BJ (cell line): ENCODE measurements at regions of chr12 and their contacts with region 1.

Region 1: DNA sequence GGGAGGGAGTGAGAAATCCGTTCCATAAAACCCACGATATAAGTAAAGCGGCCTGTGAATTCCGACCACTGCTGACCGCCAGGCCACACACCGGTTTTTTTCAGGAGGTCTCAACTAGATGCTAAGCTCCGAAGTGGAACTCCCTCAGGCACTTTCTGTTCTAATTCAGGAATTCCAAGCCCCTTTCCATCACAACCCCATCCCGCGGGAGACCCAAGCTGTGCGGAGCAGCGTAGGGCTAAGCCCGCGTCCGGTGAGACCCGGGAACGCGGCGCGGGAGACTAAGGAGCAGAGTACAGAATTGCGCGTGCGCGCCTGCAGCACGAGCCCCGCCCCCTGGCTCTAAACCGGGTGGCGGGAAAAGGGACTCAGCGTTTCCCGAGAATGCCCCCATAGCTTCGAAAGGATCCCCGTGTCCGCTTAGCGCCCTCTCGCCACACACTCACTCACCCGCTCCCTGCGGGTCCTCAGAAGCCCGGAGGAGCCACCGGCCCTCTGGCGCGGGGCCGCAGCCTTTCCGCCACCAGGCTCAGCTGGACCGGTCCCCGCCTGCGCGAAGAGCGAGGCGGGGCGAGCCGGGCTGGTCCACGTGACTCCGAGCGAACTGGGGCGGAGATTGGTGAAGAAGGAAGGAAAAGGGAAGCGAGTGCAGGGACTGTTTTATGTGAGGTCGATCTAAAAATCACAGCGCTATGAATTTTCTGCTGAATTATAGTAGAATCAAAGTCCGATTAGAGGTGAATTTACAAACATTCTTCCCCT is at the start of gene TIMELESS:
- DNase-seq: peak; percentile 51
- H3K4me3 ChIP-seq: peak within 1 kb of the TSS; percentile 68
- H3K27me3 ChIP-seq: peaks cover 2% of the 10 kb centered on the region; the same call in 1 of the 2 replicates
- CTCF ChIP-seq: no peak
- polyA plus RNA-seq, gene TIMELESS: 2.3 and 2.9 TPM in 2 replicates

Region 2: GRCh38 chr12:56468216-56469006 is 19.4 kb after region 1 on chr12 and contains the start of gene SPRYD4:
- CTCF ChIA-PET with region 1: interaction called, 10 read pairs
- POLR2A ChIA-PET with region 1: no interaction called
- DNase-seq: peak; percentile 46
- H3K4me3 ChIP-seq: peak within 1 kb of the TSS; percentile 69
- H3K27me3 ChIP-seq: no peaks in the 10 kb centered on the region
- CTCF ChIP-seq: peak; percentile 43
- polyA plus RNA-seq, gene SPRYD4: 2.4 and 2.6 TPM in 2 replicates